Activated CD4-positive, alpha-beta memory T cell treated with anti-CD3 and anti-CD28 coated beads, Interleukin-2, amount 10 ng/mL, durations not matched to agents 7 days and 5 days (primary cell): ENCODE measurements at regions of chr12 and their contacts with region 1.

Region 1: GRCh38 chr12:108664338-108665258 is 30.9 kb upstream of the SELPLG start:
- DNase-seq: peak; percentile 88
- H3K4me3 Mint-ChIP-seq: no peak overlapping the region
- H3K27ac Mint-ChIP-seq: peak overlapping the region; percentile 64
- H3K4me1 Mint-ChIP-seq: peaks cover 16% of the 10 kb centered on the region
- H3K27me3 Mint-ChIP-seq: no peaks in the 10 kb centered on the region

Region 2: DNA sequence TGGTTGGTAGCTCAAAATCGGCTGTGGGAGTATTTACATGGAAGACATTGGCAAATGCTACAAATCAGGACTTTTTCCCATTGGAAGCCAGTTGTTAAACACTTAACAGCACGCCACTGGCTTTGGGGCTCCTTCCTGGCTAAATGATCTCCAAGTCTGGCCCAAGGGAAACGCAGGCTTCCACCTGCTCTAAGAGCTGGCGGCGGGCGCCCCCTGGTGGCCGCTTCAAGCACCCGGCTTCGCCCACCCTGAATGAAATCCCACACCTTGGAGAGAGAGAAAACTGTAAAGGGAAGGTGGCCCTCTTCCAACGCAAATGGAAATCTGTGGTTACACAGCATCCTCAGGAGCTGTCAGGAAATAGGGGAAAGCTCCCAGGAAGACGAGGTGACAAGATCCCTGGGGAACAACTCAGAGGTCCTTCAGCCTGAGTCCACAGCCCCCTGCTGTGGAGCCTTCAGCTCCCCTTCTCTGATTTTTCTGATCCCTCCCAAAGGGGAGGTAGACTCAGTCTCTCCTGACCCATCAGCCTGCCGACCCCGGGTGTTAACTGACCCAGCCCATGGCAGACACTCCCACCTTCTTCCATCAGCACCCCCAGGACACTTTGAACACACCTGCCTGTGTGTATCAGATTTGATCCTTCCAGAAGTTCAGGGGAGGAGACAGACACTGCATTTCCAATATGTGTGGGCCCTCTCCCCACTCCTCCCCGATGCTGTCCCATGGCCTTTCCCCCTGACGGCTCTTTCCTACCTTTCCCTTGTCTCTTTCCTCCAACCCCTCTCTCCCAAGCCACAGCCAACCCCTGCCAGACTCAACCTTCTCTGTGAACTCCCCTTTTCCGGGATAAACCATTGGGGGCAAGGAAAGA is 46.3 kb before region 1 on chr12:
- CTCF ChIA-PET with region 1: interaction called, 30 read pairs
- POLR2A ChIA-PET with region 1: interaction called, 4 read pairs
- DNase-seq: peak; percentile 75
- H3K4me3 Mint-ChIP-seq: no peak overlapping the region
- H3K27ac Mint-ChIP-seq: peak overlapping the region; percentile 68
- H3K4me1 Mint-ChIP-seq: peaks cover 79% of the 10 kb centered on the region
- H3K27me3 Mint-ChIP-seq: no peaks in the 10 kb centered on the region

Region 3: GRCh38 chr12:108640802-108641445 is 23.7 kb before region 1 on chr12:
- CTCF ChIA-PET with region 1: interaction called, 45 read pairs
- POLR2A ChIA-PET with region 1: interaction called, 57 read pairs
- DNase-seq: no peak
- H3K4me3 Mint-ChIP-seq: no peak overlapping the region
- H3K27ac Mint-ChIP-seq: no peak overlapping the region
- H3K4me1 Mint-ChIP-seq: peaks cover 45% of the 10 kb centered on the region
- H3K27me3 Mint-ChIP-seq: no peaks in the 10 kb centered on the region

Region 4: GRCh38 chr12:108685469-108686260 is 21.1 kb after region 1 on chr12:
- CTCF ChIA-PET with region 1: interaction called, 21 read pairs
- POLR2A ChIA-PET with region 1: interaction called, 3 read pairs
- DNase-seq: no peak
- H3K4me3 Mint-ChIP-seq: no peak overlapping the region
- H3K27ac Mint-ChIP-seq: no peak overlapping the region
- H3K4me1 Mint-ChIP-seq: peaks cover 44% of the 10 kb centered on the region
- H3K27me3 Mint-ChIP-seq: no peaks in the 10 kb centered on the region

Region 5: GRCh38 chr12:108731105-108731865 is 66.7 kb after region 1 on chr12 and contains the start of gene CORO1C:
- CTCF ChIA-PET with region 1: interaction called, 4 read pairs
- POLR2A ChIA-PET with region 1: interaction called, 10 read pairs
- DNase-seq: peak; percentile 98
- H3K4me3 Mint-ChIP-seq: peak within 1 kb of the TSS; percentile 93
- H3K27ac Mint-ChIP-seq: peak within 1 kb of the TSS; percentile 89
- H3K4me1 Mint-ChIP-seq: peaks cover 35% of the 10 kb centered on the region
- H3K27me3 Mint-ChIP-seq: peaks cover 16% of the 10 kb centered on the region
- total RNA-seq, gene CORO1C: 30.9 to 35.7 TPM

Region 6: DNA sequence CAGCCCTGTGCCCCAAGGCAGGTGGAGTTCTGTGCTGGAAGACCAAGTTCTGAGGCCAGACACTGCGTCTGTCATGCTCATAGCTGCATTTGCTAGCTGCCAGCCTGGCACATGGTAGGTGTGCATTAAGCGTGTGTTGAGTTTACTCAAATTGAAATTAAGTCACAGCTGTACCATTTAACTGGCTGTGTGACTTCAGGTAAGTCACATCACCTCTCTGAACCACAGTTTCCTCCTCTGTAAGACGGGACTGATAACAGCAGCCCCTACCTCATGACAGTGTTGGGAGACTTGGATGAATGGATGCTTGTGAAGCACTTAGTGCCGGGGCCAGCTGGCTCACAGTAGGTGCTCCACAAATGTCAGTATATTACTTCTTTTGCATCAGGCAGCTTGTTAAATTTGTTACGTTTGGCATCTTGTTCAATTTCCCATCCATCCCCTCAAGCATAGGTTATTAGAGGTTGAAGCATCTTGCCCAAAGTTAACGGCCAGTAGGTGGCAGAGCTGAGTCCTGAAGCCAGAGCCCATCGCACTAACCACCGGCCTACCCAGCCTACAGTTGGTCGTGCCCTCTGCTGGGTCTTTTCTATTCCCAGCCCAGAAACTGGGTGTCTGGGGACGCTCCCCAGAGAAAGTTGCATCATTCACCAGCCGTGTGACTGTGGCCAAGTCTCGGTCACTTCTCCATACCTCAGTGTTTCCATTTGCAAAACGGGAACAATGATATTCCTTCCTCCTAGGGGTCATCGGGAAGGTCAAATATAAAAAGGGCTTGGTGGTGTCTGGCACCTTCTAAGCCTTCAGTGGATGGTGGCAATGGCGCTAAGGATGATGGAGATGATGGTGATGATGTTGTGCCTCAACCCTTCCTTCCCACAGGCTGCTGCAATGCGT is 219.8 kb after region 1 on chr12:
- CTCF ChIA-PET with region 1: interaction called, 12 read pairs
- POLR2A ChIA-PET with region 1: no interaction called
- DNase-seq: peak; percentile 72
- H3K4me3 Mint-ChIP-seq: no peak overlapping the region
- H3K27ac Mint-ChIP-seq: no peak overlapping the region
- H3K4me1 Mint-ChIP-seq: peaks cover 5% of the 10 kb centered on the region
- H3K27me3 Mint-ChIP-seq: peaks cover 3% of the 10 kb centered on the region